ENCODE measurements at regions of chr7 and their contacts with region 1.

Region 1: GRCh38 chr7:123154231-123154860 is 45.4 kb downstream of the SLC13A1 start:
- DNase-seq: peak in 1 of 2 donors; percentile 72
- ATAC-seq: peak in 7 of 8 donors; percentile 52 to 85 (median 74)
- H3K4me3 ChIP-seq: no peak overlapping the region
- H3K27ac ChIP-seq: no peak overlapping the region
- H3K4me1 ChIP-seq: peaks cover 0 to 5% (median 0%) of the 10 kb centered on the region in 9 donors
- H3K27me3 ChIP-seq: no peaks in the 10 kb centered on the region
- CTCF ChIP-seq: peak; percentile 62 to 90 (median 78)

Region 2: DNA sequence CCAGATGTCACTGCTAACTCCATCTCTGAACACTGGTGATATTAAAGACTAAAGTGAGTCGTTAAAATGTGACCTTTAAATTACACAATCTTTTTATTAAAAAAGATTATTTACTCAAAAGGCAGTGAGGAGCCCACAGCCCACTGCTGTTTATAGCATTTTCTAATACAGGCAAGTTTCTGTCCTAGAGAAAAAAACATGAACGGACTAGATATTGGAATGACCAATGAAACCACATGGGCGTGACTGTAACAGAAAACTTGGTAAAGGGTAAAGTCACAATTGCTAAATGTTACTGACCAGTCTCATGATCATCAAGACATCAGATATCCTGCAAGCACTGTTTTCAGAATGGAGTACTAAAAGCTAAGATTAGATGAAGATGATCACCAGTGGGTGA is 928.5 kb before region 1 on chr7:
- intact Hi-C with region 1: loop called in 1 of 10 experiments (anchors 10 kb)
- DNase-seq: no peak
- ATAC-seq: no peak
- H3K4me3 ChIP-seq: no peak overlapping the region
- H3K27ac ChIP-seq: no peak overlapping the region
- H3K4me1 ChIP-seq: no peaks in the 10 kb centered on the region
- H3K27me3 ChIP-seq: peaks cover 0 to 6% (median 0%) of the 10 kb centered on the region in 7 donors
- CTCF ChIP-seq: no peak

Region 3: GRCh38 chr7:122803323-122803722 is 351.0 kb before region 1 on chr7:
- intact Hi-C with region 1: loop called in 5 of 10 experiments (anchors 2 to 10 kb)
- DNase-seq: peak in 1 of 2 donors; percentile 16
- ATAC-seq: peak in 6 of 8 donors; percentile 25 to 76 (median 58)
- H3K4me3 ChIP-seq: no peak overlapping the region
- H3K27ac ChIP-seq: peak overlapping the region in 8 of 10 donors; percentile 43 to 76 (median 73)
- H3K4me1 ChIP-seq: peaks cover 0 to 32% (median 18%) of the 10 kb centered on the region in 9 donors
- H3K27me3 ChIP-seq: no peaks in the 10 kb centered on the region
- CTCF ChIP-seq: peak; percentile 25 to 76 (median 52)

Region 4: DNA sequence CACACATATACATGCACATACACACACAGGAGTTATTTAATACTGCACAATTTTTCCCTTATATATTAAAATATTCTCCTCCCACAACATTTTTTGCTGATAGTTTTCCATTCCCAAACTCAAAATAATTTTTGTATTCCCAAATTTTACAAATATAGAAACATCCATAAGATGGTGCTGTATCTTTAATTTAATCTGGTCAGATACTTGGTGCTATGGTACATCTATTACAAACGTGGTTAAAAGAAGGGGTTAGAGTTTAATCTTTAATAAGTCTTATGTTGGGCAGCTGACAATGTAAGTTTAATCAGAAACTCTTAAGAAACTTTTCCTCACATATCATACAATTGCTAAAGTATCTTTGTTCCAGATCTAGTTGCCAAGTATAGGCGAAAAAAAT is 257.8 kb before region 1 on chr7:
- intact Hi-C with region 1: loop called in 1 of 10 experiments (anchors 10 kb)
- DNase-seq: no peak
- ATAC-seq: no peak
- H3K4me3 ChIP-seq: no peak overlapping the region
- H3K27ac ChIP-seq: no peak overlapping the region
- H3K4me1 ChIP-seq: no peaks in the 10 kb centered on the region
- H3K27me3 ChIP-seq: peaks cover 0 to 3% (median 0%) of the 10 kb centered on the region in 7 donors
- CTCF ChIP-seq: no peak

Region 5: GRCh38 chr7:122935620-122936019 is 218.7 kb before region 1 on chr7:
- intact Hi-C with region 1: no loop called
- DNase-seq: no peak
- ATAC-seq: no peak
- H3K4me3 ChIP-seq: no peak overlapping the region
- H3K27ac ChIP-seq: no peak overlapping the region
- H3K4me1 ChIP-seq: no peaks in the 10 kb centered on the region
- H3K27me3 ChIP-seq: no peaks in the 10 kb centered on the region
- CTCF ChIP-seq: no peak

Measured in heart right ventricle (tissue), 16 donors.